Panc1 (cell line): ENCODE measurements at regions of chr3 and their contacts with region 1.

Region 1: DNA sequence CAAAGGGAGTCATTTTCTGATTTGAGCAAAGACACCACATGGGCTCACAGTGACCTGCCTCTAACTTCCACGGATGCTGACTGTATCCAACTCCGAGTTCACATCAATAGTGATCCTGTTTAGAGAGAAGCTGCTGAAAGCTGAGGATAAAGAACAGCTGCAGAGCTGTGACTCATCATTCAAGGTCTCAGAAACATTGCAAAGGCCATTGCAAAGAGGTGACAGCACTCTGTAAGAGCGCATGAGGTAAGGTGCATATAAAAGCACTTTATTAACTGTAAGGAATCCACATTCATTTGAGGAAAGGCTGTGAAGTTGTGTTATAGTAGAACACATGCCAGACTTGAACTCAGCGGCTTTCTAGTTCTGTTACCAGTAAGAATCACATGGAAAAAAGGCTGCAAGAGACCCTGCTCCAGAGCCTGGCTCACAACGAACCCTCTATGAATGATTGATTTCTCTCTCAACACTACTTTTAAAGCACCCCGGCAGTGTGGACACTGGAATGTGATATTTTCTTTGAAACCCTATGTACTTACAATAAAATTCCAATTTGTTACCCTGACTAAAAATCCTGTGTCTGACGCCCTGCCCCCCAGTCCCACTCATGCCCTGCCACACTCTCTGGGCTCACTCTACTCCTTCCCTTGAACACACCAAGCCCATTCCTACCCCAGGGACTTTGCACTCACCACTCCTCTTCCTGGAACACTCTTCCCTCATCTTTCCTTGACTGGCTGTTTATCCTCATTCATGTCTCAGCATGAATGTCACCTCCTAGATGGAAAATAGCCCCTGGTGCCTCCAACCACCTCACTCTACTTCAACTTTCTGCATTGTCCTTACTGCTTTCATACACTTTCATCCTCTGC is 111.2 kb downstream of the LSM3 start:
- DNase-seq: peak; percentile 28
- ATAC-seq: peak; percentile 86
- H3K4me3 ChIP-seq: no peak overlapping the region
- H3K27ac ChIP-seq: peak overlapping the region; percentile 75
- H3K4me1 ChIP-seq: peaks cover 11% of the 10 kb centered on the region; the same call in 1 of the 2 replicates
- H3K27me3 ChIP-seq: no peaks in the 10 kb centered on the region
- CTCF ChIP-seq: no peak

Region 2: GRCh38 chr3:14181253-14181652 is 108.6 kb before region 1 on chr3:
- CTCF ChIA-PET with region 1: no interaction called
- POLR2A ChIA-PET with region 1: interaction called, 10 read pairs
- in situ Hi-C with region 1: no loop called
- intact Hi-C with region 1: no loop called
- DNase-seq: no peak
- ATAC-seq: no peak
- H3K4me3 ChIP-seq: no peak overlapping the region
- H3K27ac ChIP-seq: no peak overlapping the region
- H3K4me1 ChIP-seq: peaks cover 14% of the 10 kb centered on the region
- H3K27me3 ChIP-seq: no peaks in the 10 kb centered on the region
- CTCF ChIP-seq: no peak